Right ventricle myocardium inferior (tissue), 1 donor: ENCODE measurements at regions of chr2 and their contacts with region 1.

Region 1: DNA sequence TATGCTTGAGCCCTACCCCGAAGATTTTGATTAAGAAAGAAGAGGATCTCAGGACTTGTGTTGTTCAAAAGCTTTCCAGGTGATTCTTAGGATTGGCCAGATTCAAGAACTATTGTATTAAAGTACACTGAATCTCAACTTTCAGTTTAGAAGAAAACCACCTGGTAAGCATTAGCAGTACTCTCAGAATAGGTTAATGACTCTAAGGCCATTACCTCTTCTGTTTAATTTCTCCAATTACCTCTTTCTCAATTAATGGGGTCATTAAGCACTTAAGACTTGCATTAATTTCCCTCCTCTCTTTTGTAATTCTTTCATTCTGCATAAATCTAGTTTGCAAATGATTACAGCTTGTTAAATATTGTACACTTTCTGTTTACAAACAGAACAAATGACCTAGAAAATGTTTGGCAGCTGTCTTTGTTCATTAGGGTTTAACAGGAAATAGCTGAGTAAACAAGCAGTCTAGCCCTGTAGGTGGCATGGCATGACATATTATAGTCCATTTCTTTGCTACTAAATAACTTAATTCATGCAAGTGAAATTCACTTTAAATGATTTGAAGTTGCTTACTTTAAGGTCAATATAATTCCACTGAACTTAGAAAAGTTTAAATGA is 20.4 kb upstream of the TDRD15 start:
- DNase-seq: no peak
- ATAC-seq: no peak

Region 2: DNA sequence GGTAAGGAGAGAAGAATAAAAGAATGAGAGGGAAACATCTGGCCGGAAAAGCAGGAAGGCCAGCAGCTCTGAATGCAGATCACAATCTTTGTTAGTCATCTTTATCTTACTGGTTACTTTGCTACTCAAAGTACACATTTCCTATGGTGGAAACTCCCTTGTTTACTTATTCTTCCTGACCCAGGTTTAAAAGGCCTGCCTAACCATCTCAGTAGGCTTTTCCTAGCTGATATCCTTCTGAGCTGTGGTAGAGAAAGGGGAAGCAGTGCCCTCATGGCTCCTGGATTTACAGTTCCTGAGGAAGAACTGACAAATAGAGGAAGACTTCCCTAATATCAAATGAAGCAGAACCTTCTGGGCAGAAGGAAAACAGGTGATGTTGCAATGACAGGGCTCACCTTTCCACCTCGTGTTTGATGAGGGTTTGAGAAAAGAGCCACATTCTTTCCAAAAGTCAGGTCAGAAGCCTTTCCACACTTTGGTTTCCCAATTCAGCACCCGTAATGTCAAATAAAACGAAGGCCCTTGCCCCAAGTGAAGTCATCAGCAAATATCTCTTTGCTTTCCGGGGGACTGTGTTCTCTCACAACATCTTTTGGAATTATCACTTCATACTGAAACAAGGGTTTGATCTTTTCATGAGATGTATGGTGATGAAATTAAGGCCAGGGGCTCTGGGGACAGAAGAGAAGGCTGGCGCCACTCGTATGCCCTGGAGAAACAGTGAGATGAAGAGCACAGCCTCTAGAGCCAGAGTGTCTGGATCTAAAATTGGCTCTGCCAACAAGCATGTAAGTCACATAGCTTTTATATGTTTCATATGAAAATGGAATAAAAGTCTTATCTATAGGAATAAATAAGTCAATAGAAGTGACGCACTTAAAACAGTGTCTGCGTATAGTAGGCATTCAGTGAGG is 32.8 kb before region 1 on chr2:
- intact Hi-C with region 1: loop called (anchors 2 kb)
- DNase-seq: no peak
- ATAC-seq: no peak

Region 3: GRCh38 chr2:21381421-21381820 is 278.0 kb after region 1 on chr2:
- intact Hi-C with region 1: no loop called
- DNase-seq: no peak
- ATAC-seq: no peak